ENCODE measurements at regions of chr19 and their contacts with region 1.

Region 1: GRCh38 chr19:1241417-1242095 is at the start of gene ATP5F1D:
- DNase-seq: peak; percentile 96
- H3K4me3 Mint-ChIP-seq: peak within 1 kb of the TSS; percentile 91
- H3K27ac Mint-ChIP-seq: peak within 1 kb of the TSS; percentile 80
- H3K4me1 Mint-ChIP-seq: peaks cover 37% of the 10 kb centered on the region
- H3K27me3 Mint-ChIP-seq: peaks cover 9% of the 10 kb centered on the region
- total RNA-seq, gene ATP5F1D: 178 to 192 TPM

Region 2: GRCh38 chr19:984165-984967 is 257.2 kb before region 1 on chr19 and contains the start of gene WDR18:
- CTCF ChIA-PET with region 1: interaction called, 10 read pairs
- POLR2A ChIA-PET with region 1: no interaction called
- intact Hi-C with region 1: no loop called
- DNase-seq: peak; percentile 94
- H3K4me3 Mint-ChIP-seq: peak within 1 kb of the TSS; percentile 94
- H3K27ac Mint-ChIP-seq: peak within 1 kb of the TSS; percentile 90
- H3K4me1 Mint-ChIP-seq: peaks cover 20% of the 10 kb centered on the region
- H3K27me3 Mint-ChIP-seq: no peaks in the 10 kb centered on the region
- total RNA-seq, gene WDR18: 73.3 to 75.8 TPM

Region 3: DNA sequence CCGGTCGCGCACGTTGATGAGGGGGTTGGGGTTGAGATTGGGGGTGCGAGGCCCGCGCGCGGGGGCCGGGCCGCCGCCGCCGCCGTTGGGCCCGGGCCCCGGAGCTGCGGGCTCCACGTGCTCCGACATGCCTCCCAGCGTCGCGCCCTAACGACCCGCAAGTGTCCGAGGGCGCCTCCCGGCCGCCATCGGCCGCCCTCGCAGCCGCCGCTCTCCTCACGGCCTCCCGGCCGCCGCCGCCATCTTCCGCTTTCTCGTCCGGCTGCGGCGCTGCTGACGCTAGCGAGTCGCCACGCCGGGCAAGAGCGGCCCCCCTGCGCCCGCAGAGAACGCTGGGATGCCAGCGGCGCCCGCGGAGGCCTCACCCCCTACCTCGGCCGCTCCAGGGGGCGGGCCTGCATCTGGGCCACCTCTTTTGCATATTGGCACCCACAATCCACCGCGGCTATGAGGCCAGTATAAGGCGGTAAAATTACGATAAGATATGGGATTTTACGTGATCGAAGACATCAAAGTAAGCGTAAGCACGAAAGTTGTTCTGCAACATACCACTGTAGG is 220.6 kb before region 1 on chr19 and contains the start of gene TMEM259:
- CTCF ChIA-PET with region 1: interaction called, 5 read pairs
- POLR2A ChIA-PET with region 1: no interaction called
- intact Hi-C with region 1: loop called (anchors 5 kb)
- DNase-seq: peak; percentile 98
- H3K4me3 Mint-ChIP-seq: peak within 1 kb of the TSS; percentile 95
- H3K27ac Mint-ChIP-seq: peak within 1 kb of the TSS; percentile 99
- H3K4me1 Mint-ChIP-seq: peaks cover 43% of the 10 kb centered on the region
- H3K27me3 Mint-ChIP-seq: peaks cover 3% of the 10 kb centered on the region
- total RNA-seq, gene TMEM259: 107 to 109 TPM

Region 4: DNA sequence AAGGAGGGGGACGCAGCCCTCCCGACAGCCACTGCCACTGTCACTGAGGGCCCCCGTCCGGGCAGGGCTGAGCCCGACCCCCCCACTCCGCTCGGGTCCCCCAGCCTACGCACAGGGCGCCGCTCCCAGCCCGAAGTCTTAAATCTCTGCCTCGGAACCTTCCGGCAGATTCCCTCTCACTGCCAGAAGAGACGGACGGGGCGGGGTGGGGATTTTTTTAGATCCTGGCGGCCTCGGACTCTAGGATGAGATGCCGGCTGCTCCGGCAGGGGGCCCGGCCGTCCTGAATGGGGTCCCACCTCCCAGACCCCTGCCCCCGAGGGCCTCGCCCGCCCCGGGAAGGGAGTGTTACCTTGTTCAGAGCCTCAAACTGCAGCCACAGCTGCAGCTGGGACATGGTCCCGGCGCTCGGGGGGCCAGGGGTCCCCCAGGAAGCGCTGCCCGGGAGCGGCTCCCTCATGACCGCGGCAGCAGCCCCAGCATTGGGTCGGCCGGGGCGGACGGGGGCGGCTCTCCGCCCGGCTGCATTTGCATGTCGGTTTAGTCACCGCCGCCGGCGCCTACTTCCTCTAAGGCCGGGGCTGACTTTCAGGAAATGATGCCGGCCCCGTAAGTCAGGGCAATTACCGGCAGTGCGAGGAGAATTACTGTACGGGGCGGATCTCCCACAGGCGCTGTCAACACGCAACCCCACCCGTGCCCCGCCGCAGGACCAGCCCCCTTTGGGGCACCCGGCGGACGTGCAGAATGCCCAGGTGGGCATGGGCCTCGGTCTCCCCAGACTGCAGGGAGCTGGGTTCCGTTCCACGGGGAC is 109.6 kb before region 1 on chr19:
- CTCF ChIA-PET with region 1: interaction called, 9 read pairs
- POLR2A ChIA-PET with region 1: no interaction called
- intact Hi-C with region 1: loop called (anchors 2 kb)
- DNase-seq: peak; percentile 96
- H3K4me3 Mint-ChIP-seq: peak overlapping the region; percentile 94
- H3K27ac Mint-ChIP-seq: peak overlapping the region; percentile 96
- H3K4me1 Mint-ChIP-seq: peaks cover 44% of the 10 kb centered on the region
- H3K27me3 Mint-ChIP-seq: no peaks in the 10 kb centered on the region

Region 5: DNA sequence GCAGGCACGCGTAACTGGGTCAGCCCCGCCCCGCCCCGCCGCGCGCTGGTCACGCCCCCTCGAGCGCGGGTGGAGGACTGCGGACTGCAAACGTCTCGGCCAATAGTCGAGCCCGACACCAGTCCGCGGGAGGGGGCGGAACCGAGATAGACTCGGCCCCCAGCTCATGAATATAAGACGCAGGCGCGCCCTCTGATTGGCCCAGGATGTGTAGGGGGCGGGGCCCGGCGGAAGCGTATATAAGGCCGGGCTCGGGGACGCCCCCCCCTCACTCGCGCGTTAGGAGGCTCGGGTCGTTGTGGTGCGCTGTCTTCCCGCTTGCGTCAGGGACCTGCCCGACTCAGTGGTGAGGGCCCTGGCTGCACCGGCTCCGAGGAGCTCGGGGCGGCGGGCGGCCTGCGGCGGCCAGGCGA is 27.5 kb after region 1 on chr19 and contains the start of gene CIRBP:
- CTCF ChIA-PET with region 1: interaction called, 649 read pairs
- POLR2A ChIA-PET with region 1: interaction called, 37 read pairs
- intact Hi-C with region 1: loop called (anchors 1 kb)
- DNase-seq: peak; percentile 100
- H3K4me3 Mint-ChIP-seq: peak within 1 kb of the TSS; percentile 90
- H3K27ac Mint-ChIP-seq: peak within 1 kb of the TSS; percentile 89
- H3K4me1 Mint-ChIP-seq: peaks cover 64% of the 10 kb centered on the region
- H3K27me3 Mint-ChIP-seq: no peaks in the 10 kb centered on the region
- total RNA-seq, gene CIRBP: 171 to 173 TPM

Region 6: GRCh38 chr19:1373534-1374249 is 132.1 kb after region 1 on chr19:
- CTCF ChIA-PET with region 1: interaction called, 10 read pairs
- POLR2A ChIA-PET with region 1: no interaction called
- intact Hi-C with region 1: no loop called
- DNase-seq: no peak
- H3K4me3 Mint-ChIP-seq: no peak overlapping the region
- H3K27ac Mint-ChIP-seq: no peak overlapping the region
- H3K4me1 Mint-ChIP-seq: no peaks in the 10 kb centered on the region
- H3K27me3 Mint-ChIP-seq: no peaks in the 10 kb centered on the region

Measured in activated CD4-positive, alpha-beta memory T cell treated with anti-CD3 and anti-CD28 coated beads for 36 hours (primary cell).